ENCODE measurements at regions of chr19 and their contacts with region 1.

Region 1: DNA sequence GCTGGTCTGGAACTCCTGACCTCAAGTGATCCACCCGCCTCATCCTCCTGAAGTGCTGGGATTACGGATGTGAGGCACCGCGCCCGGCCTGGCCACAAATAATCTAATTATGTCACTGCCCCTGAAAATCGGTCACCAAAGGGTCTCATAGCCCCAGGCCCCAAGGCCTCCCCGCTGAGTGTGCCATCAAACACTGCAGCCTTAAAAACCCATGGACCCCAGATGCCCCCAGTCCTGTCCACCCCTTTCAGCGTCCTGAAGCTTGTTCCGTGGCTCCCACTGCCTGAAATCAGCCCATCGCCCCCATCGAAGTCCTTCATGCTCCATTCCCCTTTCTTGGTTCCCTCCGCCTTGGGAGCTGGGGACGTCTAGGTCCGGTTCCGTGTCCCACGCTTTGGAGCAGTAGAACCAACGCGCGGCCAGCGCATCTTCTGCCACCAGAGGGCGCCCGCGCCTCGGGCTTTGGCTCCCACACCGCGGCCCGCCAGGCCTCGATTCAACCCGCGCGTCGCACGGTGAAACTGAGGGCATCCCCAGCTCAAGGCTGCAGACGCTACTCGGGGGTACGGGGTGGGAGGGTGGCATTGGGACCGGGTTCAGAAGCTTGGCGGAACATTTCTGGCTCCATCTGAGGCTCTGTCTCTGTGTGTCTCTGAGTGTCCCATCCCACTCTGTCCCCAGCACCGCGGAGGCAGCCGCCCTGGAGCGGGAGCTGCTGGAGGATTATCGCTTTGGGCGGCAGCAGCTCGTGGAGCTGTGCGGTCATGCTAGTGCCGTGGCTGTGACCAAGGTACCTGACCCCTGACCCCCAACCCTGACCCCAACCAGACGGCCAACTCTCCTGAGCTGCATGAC is 3.5 kb downstream of the YJEFN3 start:
- DNase-seq: no peak
- H3K4me3 ChIP-seq: no peak overlapping the region
- H3K27me3 ChIP-seq: no peaks in the 10 kb centered on the region
- CTCF ChIP-seq: peak; percentile 98

Region 2: DNA sequence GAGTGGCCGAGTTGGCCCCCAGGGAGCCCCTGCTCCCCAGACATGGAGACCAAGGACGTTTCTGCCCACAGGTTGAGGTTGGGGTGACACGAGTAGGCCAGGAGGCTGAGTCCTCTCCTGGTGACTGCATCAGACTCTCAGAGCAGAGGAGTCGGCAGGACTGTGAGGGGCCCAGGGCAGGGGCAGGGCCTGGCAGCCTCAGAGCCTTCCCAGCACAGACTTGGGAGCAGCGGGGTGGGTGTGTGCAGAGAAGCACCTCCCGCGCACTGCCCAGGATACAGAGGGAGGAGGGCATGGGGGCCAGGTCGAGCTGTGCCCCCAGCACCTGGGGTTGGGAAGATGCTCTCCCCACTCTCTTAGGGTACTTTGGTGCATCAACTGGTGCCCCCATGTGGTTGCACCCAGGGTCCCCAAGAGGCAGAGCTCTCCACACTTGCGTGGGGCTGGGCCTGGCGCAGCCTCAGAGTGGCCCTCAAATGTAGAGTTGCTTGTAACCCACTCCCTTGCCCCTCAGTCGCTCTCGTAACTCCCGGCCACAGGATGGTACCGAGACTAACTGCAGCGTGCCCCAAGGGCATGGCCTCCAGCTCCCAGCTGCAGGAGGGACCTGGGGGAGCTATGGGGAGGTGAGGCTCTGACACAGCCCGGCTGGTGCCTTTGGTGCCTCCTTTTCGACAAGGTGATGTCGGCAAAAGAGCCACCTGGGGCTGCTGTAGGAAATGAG is 32.7 kb before region 1 on chr19:
- CTCF ChIA-PET with region 1: no interaction called
- POLR2A ChIA-PET with region 1: no interaction called
- DNase-seq: no peak
- H3K4me3 ChIP-seq: no peak overlapping the region
- H3K27me3 ChIP-seq: no peaks in the 10 kb centered on the region
- CTCF ChIP-seq: no peak

Region 3: DNA sequence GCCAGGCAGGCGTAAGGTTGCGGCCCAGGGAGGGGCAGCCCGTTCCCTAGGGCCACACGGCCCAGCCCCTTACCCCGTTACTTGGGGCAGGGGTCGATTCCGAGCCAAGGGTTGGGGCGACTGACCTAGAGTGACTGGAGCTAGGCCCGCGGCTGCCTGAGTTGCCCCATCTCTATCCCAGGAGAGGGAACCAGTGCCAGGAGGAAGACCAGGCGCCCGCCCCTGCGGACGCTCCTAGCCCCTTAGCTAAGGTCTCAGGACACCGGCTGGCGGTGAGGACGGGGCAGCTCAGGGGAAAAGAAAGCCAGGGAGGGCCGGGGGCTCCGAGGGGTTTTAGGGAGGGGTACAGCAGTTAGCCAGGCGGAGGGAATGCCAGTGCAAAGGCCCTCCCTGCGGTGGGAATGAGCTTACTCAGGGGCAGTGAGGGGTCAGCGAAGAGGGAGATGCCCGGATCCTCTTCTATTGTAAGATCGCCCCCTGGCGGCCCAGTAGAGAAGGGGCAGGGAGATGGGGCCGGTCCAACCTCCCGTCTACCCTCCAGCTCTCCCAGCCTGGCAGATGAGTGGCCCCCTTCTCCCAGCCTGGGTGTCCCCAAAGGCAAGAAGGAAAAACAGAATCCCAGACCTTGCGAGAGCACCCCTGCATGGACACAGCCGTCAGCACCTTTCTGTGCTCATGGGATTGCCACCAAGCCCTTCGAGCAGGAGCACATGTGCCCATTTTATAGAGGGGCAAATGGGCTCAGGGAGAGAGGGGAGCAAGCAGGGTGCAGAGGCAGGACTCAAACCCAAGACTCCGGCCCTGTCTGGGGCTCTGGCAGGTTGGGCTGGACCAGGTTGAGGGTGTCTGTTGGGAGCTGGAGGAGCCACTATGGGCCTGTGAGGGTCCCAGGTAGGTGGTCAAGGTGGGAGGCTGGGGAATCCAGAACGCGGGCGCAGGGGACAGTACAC is 22.2 kb after region 1 on chr19:
- CTCF ChIA-PET with region 1: interaction called, 103 read pairs
- POLR2A ChIA-PET with region 1: no interaction called
- DNase-seq: no peak
- H3K4me3 ChIP-seq: no peak overlapping the region
- H3K27me3 ChIP-seq: no peaks in the 10 kb centered on the region
- CTCF ChIP-seq: peak; percentile 81

Region 4: GRCh38 chr19:19568802-19569756 is 36.9 kb after region 1 on chr19:
- CTCF ChIA-PET with region 1: interaction called, 11 read pairs
- POLR2A ChIA-PET with region 1: interaction called, 3 read pairs
- DNase-seq: no peak
- H3K4me3 ChIP-seq: no peak overlapping the region
- H3K27me3 ChIP-seq: no peaks in the 10 kb centered on the region
- CTCF ChIP-seq: no peak

Region 5: DNA sequence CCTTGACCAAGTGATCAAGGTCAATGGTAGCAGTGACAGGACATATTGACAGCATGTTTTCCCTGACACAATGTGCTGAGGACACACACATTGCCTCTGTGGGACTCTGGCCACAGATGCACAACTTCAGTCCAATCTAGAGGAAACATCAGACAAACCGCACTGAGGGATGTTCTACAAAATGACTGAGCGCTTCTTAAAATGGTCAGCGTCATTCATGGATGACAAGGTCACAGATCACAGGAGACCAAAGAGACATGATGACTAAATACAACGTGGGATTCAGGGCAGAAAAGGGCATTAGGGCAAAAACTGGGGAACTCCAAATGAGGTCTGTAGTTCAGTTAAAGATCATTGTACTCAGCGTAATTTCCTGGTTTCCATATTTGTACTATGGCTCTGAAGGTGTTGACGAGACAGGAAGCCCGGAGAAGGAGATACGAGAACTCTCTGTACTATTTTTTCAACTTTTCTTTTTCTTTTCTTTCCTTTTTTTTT is 65.7 kb after region 1 on chr19:
- CTCF ChIA-PET with region 1: no interaction called
- POLR2A ChIA-PET with region 1: no interaction called
- DNase-seq: no peak
- H3K4me3 ChIP-seq: no peak overlapping the region
- H3K27me3 ChIP-seq: no peaks in the 10 kb centered on the region
- CTCF ChIP-seq: no peak

Region 6: GRCh38 chr19:19643158-19644053 is 111.2 kb after region 1 on chr19 and contains the start of gene GMIP:
- CTCF ChIA-PET with region 1: interaction called, 83 read pairs
- POLR2A ChIA-PET with region 1: no interaction called
- DNase-seq: no peak
- H3K4me3 ChIP-seq: peak within 1 kb of the TSS; percentile 62
- H3K27me3 ChIP-seq: no peaks in the 10 kb centered on the region
- CTCF ChIP-seq: peak; percentile 93
- polyA plus RNA-seq, gene GMIP: 3.8 and 4.4 TPM in 2 replicates

Region 7: DNA sequence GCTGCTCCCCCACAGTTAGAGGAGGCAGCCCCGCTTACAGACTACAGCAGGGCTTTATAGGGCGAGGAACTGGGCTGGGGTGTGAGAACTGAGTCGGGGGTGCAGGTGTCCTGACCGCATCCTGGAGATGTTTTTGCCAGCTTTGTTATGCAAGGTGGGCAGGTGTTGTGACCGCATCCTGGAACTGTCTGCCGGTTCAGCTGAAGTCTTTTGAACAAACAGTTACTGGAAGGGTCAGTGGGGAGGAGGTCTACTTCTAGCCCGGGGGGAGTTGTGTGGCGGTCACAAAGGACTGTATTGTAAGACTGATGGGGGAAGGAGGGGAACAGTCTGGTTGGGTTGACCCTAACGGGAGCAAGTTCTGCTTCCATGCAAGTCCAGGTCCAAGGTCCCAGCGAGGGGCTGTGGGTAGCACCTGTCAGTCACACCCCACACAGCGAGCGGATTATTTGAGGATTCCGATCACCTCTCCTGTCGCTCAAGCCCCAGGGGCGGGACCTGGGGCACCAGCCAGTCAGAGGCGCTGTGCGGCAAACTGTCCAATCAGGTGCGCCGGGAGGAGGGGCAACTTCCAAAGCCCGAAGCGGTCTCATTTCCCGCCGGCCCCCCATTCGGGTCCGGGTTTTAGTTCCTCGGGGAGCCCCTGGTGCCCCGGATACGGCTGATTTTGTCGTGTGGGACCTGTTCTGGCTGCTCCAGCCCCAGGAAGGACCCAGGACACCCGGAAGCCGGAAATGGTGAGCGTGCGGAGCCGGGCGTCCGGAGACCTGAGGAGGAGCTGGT is 136.2 kb after region 1 on chr19 and contains the start of gene ZNF101:
- CTCF ChIA-PET with region 1: no interaction called
- POLR2A ChIA-PET with region 1: no interaction called
- DNase-seq: peak; percentile 59
- H3K4me3 ChIP-seq: peak within 1 kb of the TSS; percentile 89
- H3K27me3 ChIP-seq: no peaks in the 10 kb centered on the region
- CTCF ChIP-seq: no peak
- polyA plus RNA-seq, gene ZNF101: 2.5 and 4.5 TPM in 2 replicates

Measured in BJ (cell line).